Gastrocnemius medialis (tissue), 4 donors: ENCODE measurements at regions of chr5 and their contacts with region 1.

Region 1: GRCh38 chr5:77015938-77016569 is 14.2 kb upstream of the AGGF1 start:
- DNase-seq: no peak
- ATAC-seq: no peak
- H3K4me3 ChIP-seq: no peak overlapping the region
- H3K27ac ChIP-seq: no peak overlapping the region
- H3K4me1 ChIP-seq: no peaks in the 10 kb centered on the region
- H3K27me3 ChIP-seq: peaks cover 0 to 2% (median 0%) of the 10 kb centered on the region in 3 donors
- CTCF ChIP-seq: no peak
- POLR2A ChIP-seq: no peak

Region 2: DNA sequence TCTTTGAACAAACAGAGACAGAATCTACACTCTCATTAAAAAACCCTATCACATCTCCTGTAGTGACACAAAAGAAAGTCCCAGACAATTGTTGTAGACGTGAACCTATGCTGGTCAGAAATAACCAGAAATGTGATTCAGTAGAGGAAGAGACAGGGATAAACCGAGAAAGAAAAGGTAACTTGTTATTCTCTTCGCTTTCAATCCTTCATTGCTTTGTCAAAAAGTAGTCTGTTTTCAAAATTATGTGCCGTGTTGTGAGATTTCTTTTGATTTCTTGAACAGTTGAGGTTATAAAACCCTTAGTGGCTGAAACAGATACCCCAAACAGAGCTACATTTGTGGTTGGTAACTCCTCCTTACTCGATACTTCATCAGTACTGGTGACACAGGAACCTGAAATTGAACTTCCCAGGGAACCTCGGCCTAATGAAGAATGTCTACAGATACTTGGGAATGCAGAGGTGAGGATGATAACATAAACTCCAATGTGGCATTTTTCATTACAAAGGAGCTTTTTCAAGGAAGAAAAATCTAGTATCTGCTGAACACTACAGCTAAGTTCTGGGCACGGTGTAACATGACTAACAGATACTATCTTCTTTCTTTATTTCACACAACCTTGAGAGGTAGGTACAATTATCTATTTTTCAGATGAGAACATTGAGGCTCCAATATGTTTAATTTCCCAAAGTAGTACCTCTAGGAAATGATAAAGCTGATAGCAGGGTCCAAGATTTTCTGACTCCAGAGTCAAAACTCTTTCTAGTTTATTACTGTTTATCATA is 1664.7 kb before region 1 on chr5:
- in situ Hi-C with region 1: no loop called
- intact Hi-C with region 1: no loop called
- DNase-seq: no peak
- ATAC-seq: no peak
- H3K4me3 ChIP-seq: no peak overlapping the region
- H3K27ac ChIP-seq: no peak overlapping the region
- H3K4me1 ChIP-seq: no peaks in the 10 kb centered on the region
- H3K27me3 ChIP-seq: no peaks in the 10 kb centered on the region
- CTCF ChIP-seq: no peak
- POLR2A ChIP-seq: no peak

Region 3: DNA sequence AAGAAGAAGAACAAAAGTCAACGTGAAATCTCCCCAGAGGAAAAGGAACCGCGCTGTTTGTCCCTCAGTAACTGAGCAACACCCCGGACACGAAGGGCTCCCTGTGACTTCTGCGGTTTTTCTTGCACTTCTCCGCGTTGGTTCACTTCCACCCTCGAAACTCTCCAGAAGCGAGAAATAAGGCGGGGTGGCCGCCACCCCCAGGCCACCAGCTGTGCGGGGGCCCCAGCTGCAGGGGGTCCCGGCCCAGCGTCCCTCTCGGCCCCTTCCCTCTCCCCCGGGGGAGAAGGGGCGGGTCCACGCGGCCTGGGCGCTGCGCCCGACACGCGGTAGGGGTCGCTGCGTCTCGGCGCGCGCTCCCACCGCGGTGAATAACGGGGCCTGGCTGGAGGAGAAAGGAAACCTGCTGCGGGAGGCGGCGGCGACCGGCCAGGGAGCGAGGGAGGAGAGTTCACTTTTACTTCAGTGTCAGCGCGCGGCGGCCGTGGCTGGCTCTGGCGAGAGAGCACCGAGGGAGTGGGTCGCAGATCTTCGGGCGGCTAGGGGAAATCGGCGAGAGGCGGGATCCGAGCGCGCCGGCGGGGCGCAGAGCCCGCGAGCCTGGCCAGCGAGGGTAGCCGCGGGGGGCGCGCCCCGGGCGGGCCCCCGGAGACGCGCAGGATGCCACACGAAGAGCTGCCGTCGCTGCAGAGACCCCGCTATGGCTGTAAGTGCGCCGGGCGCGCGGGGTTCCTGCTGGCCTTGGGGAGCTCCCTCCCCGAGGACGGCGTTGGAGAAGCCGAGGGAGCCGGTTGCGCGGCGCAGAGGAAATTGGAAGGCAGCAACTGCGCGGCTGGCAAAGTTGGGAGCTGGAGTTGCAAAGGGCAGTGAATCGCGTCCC is 612.9 kb before region 1 on chr5 and contains the start of gene IQGAP2:
- in situ Hi-C with region 1: no loop called
- intact Hi-C with region 1: no loop called
- DNase-seq: peak; percentile 23 to 37
- ATAC-seq: no peak
- H3K4me3 ChIP-seq: peak within 1 kb of the TSS; percentile 43 to 63 (median 56)
- H3K27ac ChIP-seq: peak within 1 kb of the TSS in 2 of 4 donors; percentile 14 to 18
- H3K4me1 ChIP-seq: peaks cover 0 to 8% of the 10 kb centered on the region in 2 donors
- H3K27me3 ChIP-seq: peaks cover 20 to 25% (median 20%) of the 10 kb centered on the region in 3 donors
- CTCF ChIP-seq: peak in 2 of 5 experiments; percentile 14 to 35
- POLR2A ChIP-seq: peak in 1 of 2 donors; percentile 17
- total RNA-seq, gene IQGAP2: 1.5 to 6.8 (median 2.5) TPM

Region 4: GRCh38 chr5:76874088-76874581 is 141.9 kb before region 1 on chr5:
- in situ Hi-C with region 1: loop called in 1 of 4 experiments (anchors 10 kb)
- intact Hi-C with region 1: no loop called
- DNase-seq: no peak
- ATAC-seq: no peak
- H3K4me3 ChIP-seq: no peak overlapping the region
- H3K27ac ChIP-seq: no peak overlapping the region
- H3K4me1 ChIP-seq: no peaks in the 10 kb centered on the region
- H3K27me3 ChIP-seq: no peaks in the 10 kb centered on the region
- CTCF ChIP-seq: no peak
- POLR2A ChIP-seq: no peak

Region 5: GRCh38 chr5:77282337-77283027 is 266.4 kb after region 1 on chr5:
- in situ Hi-C with region 1: no loop called
- intact Hi-C with region 1: no loop called
- DNase-seq: no peak
- ATAC-seq: peak in 1 of 2 donors; percentile 30
- H3K4me3 ChIP-seq: no peak overlapping the region
- H3K27ac ChIP-seq: no peak overlapping the region
- H3K4me1 ChIP-seq: no peaks in the 10 kb centered on the region
- H3K27me3 ChIP-seq: no peaks in the 10 kb centered on the region
- CTCF ChIP-seq: no peak
- POLR2A ChIP-seq: no peak